ENCODE measurements at regions of chr6 and their contacts with region 1.

Region 1: DNA sequence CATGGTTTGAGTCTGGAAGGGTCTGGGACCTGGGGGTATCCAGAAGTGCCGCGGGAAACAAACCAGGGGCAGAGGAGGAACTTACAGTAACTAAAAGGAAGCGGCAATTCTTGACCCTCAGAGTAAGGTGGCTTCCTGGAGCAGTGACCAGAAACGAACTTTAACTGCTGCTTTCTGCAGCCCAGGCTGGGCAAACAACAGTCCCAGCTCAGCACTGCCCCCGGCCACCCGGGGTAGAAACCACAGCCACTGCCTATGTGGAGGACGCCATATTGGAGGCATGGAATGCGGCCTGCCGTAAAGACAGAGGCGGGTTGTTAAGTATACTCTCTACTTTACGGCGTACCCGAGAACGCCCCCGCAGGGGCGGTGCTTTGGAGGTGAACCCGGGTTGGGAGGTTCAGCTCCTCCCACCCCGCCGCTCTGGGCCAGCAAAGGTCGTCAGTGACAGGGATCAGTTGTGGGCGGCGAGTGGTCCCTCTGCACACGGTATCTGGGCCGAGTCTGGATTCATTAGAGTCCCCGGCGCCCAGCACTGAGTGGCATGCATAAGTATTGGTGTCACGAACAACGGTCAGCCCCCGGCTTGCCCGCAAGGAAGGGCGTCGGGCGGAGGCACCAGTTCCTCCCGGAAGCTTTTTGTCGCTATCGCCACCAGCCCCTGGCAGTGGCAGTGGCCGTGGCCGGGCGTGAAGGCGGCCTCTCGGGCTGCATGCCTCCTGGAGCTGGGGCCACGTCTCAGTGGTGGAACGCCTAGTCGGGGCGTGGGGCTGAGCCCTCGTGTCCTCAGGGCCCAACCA is at the start of gene PDSS2:
- DNase-seq: peak; percentile 92 to 99 (median 94)
- H3K4me3 ChIP-seq: peak within 1 kb of the TSS; percentile 88 to 92
- H3K4me3 Mint-ChIP-seq: peak within 1 kb of the TSS; percentile 93 to 100 (median 98)
- H3K27ac ChIP-seq: peak within 1 kb of the TSS; percentile 86
- H3K27ac Mint-ChIP-seq: peak within 1 kb of the TSS; percentile 87 to 98 (median 97)
- H3K4me1 ChIP-seq: peaks cover 16% of the 10 kb centered on the region
- H3K4me1 Mint-ChIP-seq: peaks cover 12 to 38% (median 18%) of the 10 kb centered on the region in 4 donors
- H3K27me3 ChIP-seq: no peaks in the 10 kb centered on the region
- H3K27me3 Mint-ChIP-seq: no peaks in the 10 kb centered on the region
- total RNA-seq, gene PDSS2: 10.0 to 11.4 TPM

Region 2: GRCh38 chr6:106325336-106326178 is 1133.9 kb before region 1 on chr6 and contains the start of gene ATG5:
- CTCF ChIA-PET with region 1: no interaction called
- POLR2A ChIA-PET with region 1: no interaction called
- intact Hi-C with region 1: loop called (anchors 10 kb)
- DNase-seq: peak; percentile 99 to 100 (median 99)
- H3K4me3 ChIP-seq: peak within 1 kb of the TSS; percentile 87 to 97
- H3K4me3 Mint-ChIP-seq: peak within 1 kb of the TSS; percentile 94 to 100 (median 99)
- H3K27ac ChIP-seq: peak within 1 kb of the TSS; percentile 85
- H3K27ac Mint-ChIP-seq: peak within 1 kb of the TSS; percentile 96 to 99 (median 98)
- H3K4me1 ChIP-seq: peaks cover 33% of the 10 kb centered on the region
- H3K4me1 Mint-ChIP-seq: peaks cover 35 to 48% (median 44%) of the 10 kb centered on the region in 4 donors
- H3K27me3 ChIP-seq: no peaks in the 10 kb centered on the region
- H3K27me3 Mint-ChIP-seq: peaks cover 5 to 7% of the 10 kb centered on the region in 2 donors
- total RNA-seq, gene ATG5: 26.8 to 30.2 TPM

Region 3: GRCh38 chr6:107114213-107114905 is 345.1 kb before region 1 on chr6:
- CTCF ChIA-PET with region 1: no interaction called
- POLR2A ChIA-PET with region 1: interaction called, 4 read pairs
- intact Hi-C with region 1: loop called (anchors 2 kb)
- DNase-seq: peak; percentile 58 to 77 (median 68)
- H3K4me3 ChIP-seq: peak overlapping the region in 1 of 2 donors; percentile 23
- H3K4me3 Mint-ChIP-seq: peak overlapping the region; percentile 76 to 89 (median 82)
- H3K27ac ChIP-seq: no peak overlapping the region
- H3K27ac Mint-ChIP-seq: peak overlapping the region in 4 of 7 donors; percentile 61 to 81 (median 70)
- H3K4me1 ChIP-seq: peaks cover 19% of the 10 kb centered on the region
- H3K4me1 Mint-ChIP-seq: peaks cover 8 to 18% (median 13%) of the 10 kb centered on the region in 4 donors
- H3K27me3 ChIP-seq: peaks cover 5% of the 10 kb centered on the region
- H3K27me3 Mint-ChIP-seq: peaks cover 3 to 5% of the 10 kb centered on the region in 2 donors

Region 4: GRCh38 chr6:107374264-107374663 is 85.2 kb before region 1 on chr6:
- CTCF ChIA-PET with region 1: no interaction called
- POLR2A ChIA-PET with region 1: no interaction called
- intact Hi-C with region 1: no loop called
- DNase-seq: no peak
- H3K4me3 ChIP-seq: no peak overlapping the region
- H3K4me3 Mint-ChIP-seq: no peak overlapping the region
- H3K27ac ChIP-seq: no peak overlapping the region
- H3K27ac Mint-ChIP-seq: no peak overlapping the region
- H3K4me1 ChIP-seq: no peaks in the 10 kb centered on the region
- H3K4me1 Mint-ChIP-seq: peaks cover 0 to 1% (median 0%) of the 10 kb centered on the region in 4 donors
- H3K27me3 ChIP-seq: no peaks in the 10 kb centered on the region
- H3K27me3 Mint-ChIP-seq: no peaks in the 10 kb centered on the region

Region 5: GRCh38 chr6:107489636-107490565 is 30.4 kb after region 1 on chr6 and contains the start of gene SOBP:
- CTCF ChIA-PET with region 1: interaction called, 3 read pairs
- POLR2A ChIA-PET with region 1: interaction called, 29 read pairs
- intact Hi-C with region 1: loop called (anchors 1 kb)
- DNase-seq: peak; percentile 28 to 44 (median 40)
- H3K4me3 ChIP-seq: peak within 1 kb of the TSS; percentile 34 to 54
- H3K4me3 Mint-ChIP-seq: peak within 1 kb of the TSS; percentile 88 to 96 (median 92)
- H3K27ac ChIP-seq: no peak within 1 kb of the TSS
- H3K27ac Mint-ChIP-seq: peak within 1 kb of the TSS in 1 of 7 donors; percentile 31
- H3K4me1 ChIP-seq: peaks cover 31% of the 10 kb centered on the region
- H3K4me1 Mint-ChIP-seq: peaks cover 12 to 29% (median 19%) of the 10 kb centered on the region in 4 donors
- H3K27me3 ChIP-seq: peaks cover 40% of the 10 kb centered on the region
- H3K27me3 Mint-ChIP-seq: peaks cover 33 to 35% of the 10 kb centered on the region in 2 donors
- total RNA-seq, gene SOBP: not detected

Region 6: GRCh38 chr6:108074359-108075144 is 615.1 kb after region 1 on chr6 and contains the start of gene OSTM1:
- CTCF ChIA-PET with region 1: no interaction called
- POLR2A ChIA-PET with region 1: interaction called, 5 read pairs
- intact Hi-C with region 1: loop called (anchors 1 kb)
- DNase-seq: peak; percentile 88 to 93 (median 93)
- H3K4me3 ChIP-seq: peak within 1 kb of the TSS; percentile 66 to 100
- H3K4me3 Mint-ChIP-seq: peak within 1 kb of the TSS; percentile 87 to 95 (median 90)
- H3K27ac ChIP-seq: peak within 1 kb of the TSS; percentile 78
- H3K27ac Mint-ChIP-seq: peak within 1 kb of the TSS; percentile 90 to 96 (median 94)
- H3K4me1 ChIP-seq: peaks cover 24% of the 10 kb centered on the region
- H3K4me1 Mint-ChIP-seq: peaks cover 18 to 32% (median 20%) of the 10 kb centered on the region in 4 donors
- H3K27me3 ChIP-seq: no peaks in the 10 kb centered on the region
- H3K27me3 Mint-ChIP-seq: peaks cover 0 to 5% of the 10 kb centered on the region in 2 donors
- total RNA-seq, gene OSTM1: 54.4 to 55.6 TPM

Region 7: GRCh38 chr6:108294727-108295625 is 835.5 kb after region 1 on chr6 and contains the start of gene AFG1L:
- CTCF ChIA-PET with region 1: no interaction called
- POLR2A ChIA-PET with region 1: interaction called, 3 read pairs
- intact Hi-C with region 1: loop called (anchors 5 kb)
- DNase-seq: peak; percentile 85 to 92 (median 88)
- H3K4me3 ChIP-seq: peak within 1 kb of the TSS; percentile 68 to 98
- H3K4me3 Mint-ChIP-seq: peak within 1 kb of the TSS; percentile 96 to 99 (median 98)
- H3K27ac ChIP-seq: peak within 1 kb of the TSS; percentile 91
- H3K27ac Mint-ChIP-seq: peak within 1 kb of the TSS; percentile 91 to 100 (median 99)
- H3K4me1 ChIP-seq: peaks cover 17% of the 10 kb centered on the region
- H3K4me1 Mint-ChIP-seq: peaks cover 6 to 23% (median 15%) of the 10 kb centered on the region in 4 donors
- H3K27me3 ChIP-seq: no peaks in the 10 kb centered on the region
- H3K27me3 Mint-ChIP-seq: no peaks in the 10 kb centered on the region
- total RNA-seq, gene AFG1L: 6.3 to 6.6 TPM